CD8-positive, alpha-beta T cell (primary cell): ENCODE measurements at regions of chr7 and their contacts with region 1.

Region 1: GRCh38 chr7:155003376-155004214 is 671 bp upstream of the PAXIP1 start:
- DNase-seq: peak; percentile 73 to 91 (median 86)
- ATAC-seq: peak; percentile 89
- H3K4me3 ChIP-seq: peak overlapping the region; percentile 92 to 93
- H3K4me3 Mint-ChIP-seq: peak overlapping the region; percentile 93
- H3K27ac ChIP-seq: peak overlapping the region; percentile 69 to 72
- H3K27ac Mint-ChIP-seq: peak overlapping the region; percentile 93
- H3K4me1 ChIP-seq: peaks cover 11% of the 10 kb centered on the region
- H3K4me1 Mint-ChIP-seq: peaks cover 24% of the 10 kb centered on the region
- H3K27me3 ChIP-seq: no peaks in the 10 kb centered on the region
- H3K27me3 Mint-ChIP-seq: no peaks in the 10 kb centered on the region
- CTCF ChIP-seq: no peak

Region 2: GRCh38 chr7:154953006-154953684 is 50.5 kb before region 1 on chr7:
- CTCF ChIA-PET with region 1: interaction called, 3 read pairs
- POLR2A ChIA-PET with region 1: interaction called, 4 read pairs
- intact Hi-C with region 1: loop called in 1 of 2 experiments (anchors 10 kb)
- DNase-seq: peak; percentile 43 to 77 (median 75)
- ATAC-seq: peak; percentile 73
- H3K4me3 ChIP-seq: no peak overlapping the region
- H3K4me3 Mint-ChIP-seq: no peak overlapping the region
- H3K27ac ChIP-seq: no peak overlapping the region
- H3K27ac Mint-ChIP-seq: no peak overlapping the region
- H3K4me1 ChIP-seq: no peaks in the 10 kb centered on the region
- H3K4me1 Mint-ChIP-seq: no peaks in the 10 kb centered on the region
- H3K27me3 ChIP-seq: no peaks in the 10 kb centered on the region
- H3K27me3 Mint-ChIP-seq: no peaks in the 10 kb centered on the region
- CTCF ChIP-seq: peak; percentile 65

Region 3: GRCh38 chr7:155069992-155070751 is 66.6 kb after region 1 on chr7 and contains the start of gene HTR5A:
- CTCF ChIA-PET with region 1: no interaction called
- POLR2A ChIA-PET with region 1: no interaction called
- intact Hi-C with region 1: loop called in 1 of 2 experiments (anchors 2 kb)
- DNase-seq: peak; percentile 53 to 85 (median 76)
- ATAC-seq: peak; percentile 100
- H3K4me3 ChIP-seq: no peak within 1 kb of the TSS
- H3K4me3 Mint-ChIP-seq: no peak within 1 kb of the TSS
- H3K27ac ChIP-seq: no peak within 1 kb of the TSS
- H3K27ac Mint-ChIP-seq: no peak within 1 kb of the TSS
- H3K4me1 ChIP-seq: peaks cover 3% of the 10 kb centered on the region
- H3K4me1 Mint-ChIP-seq: no peaks in the 10 kb centered on the region
- H3K27me3 ChIP-seq: peaks cover 0 to 4% of the 10 kb centered on the region in 2 experiments
- H3K27me3 Mint-ChIP-seq: peaks cover 45% of the 10 kb centered on the region
- CTCF ChIP-seq: no peak
- total RNA-seq, gene HTR5A: not detected

Region 4: DNA sequence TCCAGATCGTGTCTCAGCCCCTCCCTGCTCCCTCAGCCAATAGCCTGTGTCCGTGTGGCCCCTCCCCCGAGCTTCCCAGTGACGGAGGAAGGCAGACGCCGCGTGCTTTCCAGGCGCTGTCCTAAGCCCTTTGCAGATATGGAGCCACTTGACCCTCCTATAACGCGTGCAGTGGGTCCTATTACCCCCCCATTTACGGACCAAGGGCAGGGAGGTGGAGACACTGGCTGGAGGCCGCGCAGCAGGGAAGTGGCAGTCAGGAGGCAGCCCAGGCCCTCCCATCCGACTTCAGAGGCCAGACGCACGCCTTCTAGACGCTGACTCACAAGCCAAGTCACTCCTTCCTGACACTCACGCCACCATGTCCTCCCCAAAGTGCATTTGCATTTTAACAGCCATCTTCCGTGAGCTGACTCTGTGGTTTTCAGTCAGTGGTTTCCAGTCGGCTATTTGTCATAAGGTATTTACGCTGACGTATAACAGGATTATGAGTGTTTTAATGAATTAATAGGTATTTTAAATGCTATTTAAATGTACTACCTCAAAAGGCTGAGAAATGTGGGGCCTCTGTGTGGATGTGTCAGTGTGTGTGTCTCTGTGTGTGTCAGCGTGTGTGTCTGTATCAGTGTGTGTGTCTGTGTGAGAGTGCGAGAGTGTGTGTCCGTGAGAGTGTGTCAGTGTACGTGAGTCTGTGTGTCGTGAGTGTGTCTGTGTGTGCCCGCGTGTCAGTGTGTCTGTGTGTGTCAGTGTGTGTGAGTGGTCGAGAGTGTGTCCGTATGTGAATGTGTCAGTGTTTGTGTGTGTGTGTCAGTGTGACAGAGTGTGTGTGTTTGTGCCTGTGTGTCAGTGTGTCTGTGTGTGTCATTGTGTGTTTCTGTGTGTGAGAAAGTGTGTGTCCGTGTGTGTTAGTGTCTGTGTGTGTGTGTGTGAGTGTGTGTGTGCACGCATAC is 202.0 kb after region 1 on chr7:
- CTCF ChIA-PET with region 1: no interaction called
- POLR2A ChIA-PET with region 1: interaction called, 4 read pairs
- intact Hi-C with region 1: loop called (anchors 1 to 5 kb)
- DNase-seq: peak; percentile 71 to 97 (median 81)
- ATAC-seq: peak; percentile 90
- H3K4me3 ChIP-seq: peak overlapping the region; percentile 59 to 65
- H3K4me3 Mint-ChIP-seq: peak overlapping the region; percentile 80
- H3K27ac ChIP-seq: peak overlapping the region; percentile 59 to 94
- H3K27ac Mint-ChIP-seq: peak overlapping the region; percentile 94
- H3K4me1 ChIP-seq: peaks cover 14% of the 10 kb centered on the region
- H3K4me1 Mint-ChIP-seq: peaks cover 22% of the 10 kb centered on the region
- H3K27me3 ChIP-seq: no peaks in the 10 kb centered on the region
- H3K27me3 Mint-ChIP-seq: no peaks in the 10 kb centered on the region
- CTCF ChIP-seq: no peak

Region 5: DNA sequence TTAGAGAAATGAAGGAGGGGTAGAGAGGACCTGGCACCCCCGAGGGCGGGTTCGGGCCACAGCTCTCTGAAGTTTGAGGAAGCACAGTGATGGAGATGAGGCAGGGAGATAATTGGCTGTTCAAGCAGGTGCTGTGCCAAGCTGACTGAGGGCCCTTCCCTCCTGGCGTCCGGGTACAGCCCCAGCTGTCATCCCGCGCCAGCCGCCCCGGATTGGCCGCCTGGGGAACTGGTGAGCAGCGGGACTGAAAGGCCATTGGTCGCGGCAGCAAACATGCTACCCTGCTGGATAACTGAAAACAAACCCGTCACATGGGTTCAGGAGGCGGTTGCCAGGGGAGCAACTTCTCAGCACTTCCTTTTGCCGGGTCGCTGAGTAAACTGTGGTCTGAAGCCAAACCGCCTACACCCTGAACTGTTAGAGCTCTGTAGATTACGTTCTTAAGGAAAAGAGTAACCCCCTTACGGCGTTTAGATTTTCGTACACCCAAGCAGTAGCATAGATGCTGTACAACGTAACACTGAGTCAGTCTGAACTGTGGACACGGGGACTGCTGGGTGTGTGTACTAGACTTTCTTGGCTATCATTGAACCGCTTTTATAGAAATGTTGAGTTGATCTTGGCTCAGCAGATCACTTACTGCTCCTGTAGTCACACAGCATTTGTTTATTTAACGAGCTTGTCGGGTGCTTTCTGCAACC is 295.4 kb after region 1 on chr7:
- CTCF ChIA-PET with region 1: interaction called, 3 read pairs
- POLR2A ChIA-PET with region 1: interaction called, 18 read pairs
- intact Hi-C with region 1: loop called (anchors 1 kb)
- DNase-seq: peak; percentile 92 to 99 (median 96)
- ATAC-seq: peak; percentile 70
- H3K4me3 ChIP-seq: peak overlapping the region; percentile 57 to 67
- H3K4me3 Mint-ChIP-seq: peak overlapping the region; percentile 90
- H3K27ac ChIP-seq: peak overlapping the region; percentile 79 to 90
- H3K27ac Mint-ChIP-seq: peak overlapping the region; percentile 98
- H3K4me1 ChIP-seq: peaks cover 34% of the 10 kb centered on the region
- H3K4me1 Mint-ChIP-seq: peaks cover 42% of the 10 kb centered on the region
- H3K27me3 ChIP-seq: no peaks in the 10 kb centered on the region
- H3K27me3 Mint-ChIP-seq: no peaks in the 10 kb centered on the region
- CTCF ChIP-seq: no peak

Region 6: GRCh38 chr7:155738652-155739537 is 735.3 kb after region 1 on chr7:
- CTCF ChIA-PET with region 1: no interaction called
- POLR2A ChIA-PET with region 1: no interaction called
- intact Hi-C with region 1: loop called in 1 of 2 experiments (anchors 10 kb)
- DNase-seq: peak; percentile 41 to 81 (median 67)
- ATAC-seq: peak; percentile 86
- H3K4me3 ChIP-seq: no peak overlapping the region
- H3K4me3 Mint-ChIP-seq: peak overlapping the region; percentile 1
- H3K27ac ChIP-seq: peak overlapping the region in 1 of 2 experiments; percentile 29
- H3K27ac Mint-ChIP-seq: peak overlapping the region; percentile 55
- H3K4me1 ChIP-seq: peaks cover 30% of the 10 kb centered on the region
- H3K4me1 Mint-ChIP-seq: peaks cover 43% of the 10 kb centered on the region
- H3K27me3 ChIP-seq: no peaks in the 10 kb centered on the region
- H3K27me3 Mint-ChIP-seq: no peaks in the 10 kb centered on the region
- CTCF ChIP-seq: peak; percentile 64

Region 7: GRCh38 chr7:155763691-155764437 is 760.3 kb after region 1 on chr7:
- CTCF ChIA-PET with region 1: no interaction called
- POLR2A ChIA-PET with region 1: no interaction called
- intact Hi-C with region 1: loop called in 1 of 2 experiments (anchors 5 kb)
- DNase-seq: peak in 8 of 9 experiments; percentile 23 to 80 (median 60)
- ATAC-seq: peak; percentile 80
- H3K4me3 ChIP-seq: peak overlapping the region in 1 of 2 experiments; percentile 28
- H3K4me3 Mint-ChIP-seq: peak overlapping the region; percentile 78
- H3K27ac ChIP-seq: peak overlapping the region; percentile 26 to 86
- H3K27ac Mint-ChIP-seq: peak overlapping the region; percentile 91
- H3K4me1 ChIP-seq: peaks cover 31% of the 10 kb centered on the region
- H3K4me1 Mint-ChIP-seq: peaks cover 54% of the 10 kb centered on the region
- H3K27me3 ChIP-seq: no peaks in the 10 kb centered on the region
- H3K27me3 Mint-ChIP-seq: no peaks in the 10 kb centered on the region
- CTCF ChIP-seq: no peak